H1 (cell line): ENCODE measurements at regions of chr2 and their contacts with region 1.

Region 1: DNA sequence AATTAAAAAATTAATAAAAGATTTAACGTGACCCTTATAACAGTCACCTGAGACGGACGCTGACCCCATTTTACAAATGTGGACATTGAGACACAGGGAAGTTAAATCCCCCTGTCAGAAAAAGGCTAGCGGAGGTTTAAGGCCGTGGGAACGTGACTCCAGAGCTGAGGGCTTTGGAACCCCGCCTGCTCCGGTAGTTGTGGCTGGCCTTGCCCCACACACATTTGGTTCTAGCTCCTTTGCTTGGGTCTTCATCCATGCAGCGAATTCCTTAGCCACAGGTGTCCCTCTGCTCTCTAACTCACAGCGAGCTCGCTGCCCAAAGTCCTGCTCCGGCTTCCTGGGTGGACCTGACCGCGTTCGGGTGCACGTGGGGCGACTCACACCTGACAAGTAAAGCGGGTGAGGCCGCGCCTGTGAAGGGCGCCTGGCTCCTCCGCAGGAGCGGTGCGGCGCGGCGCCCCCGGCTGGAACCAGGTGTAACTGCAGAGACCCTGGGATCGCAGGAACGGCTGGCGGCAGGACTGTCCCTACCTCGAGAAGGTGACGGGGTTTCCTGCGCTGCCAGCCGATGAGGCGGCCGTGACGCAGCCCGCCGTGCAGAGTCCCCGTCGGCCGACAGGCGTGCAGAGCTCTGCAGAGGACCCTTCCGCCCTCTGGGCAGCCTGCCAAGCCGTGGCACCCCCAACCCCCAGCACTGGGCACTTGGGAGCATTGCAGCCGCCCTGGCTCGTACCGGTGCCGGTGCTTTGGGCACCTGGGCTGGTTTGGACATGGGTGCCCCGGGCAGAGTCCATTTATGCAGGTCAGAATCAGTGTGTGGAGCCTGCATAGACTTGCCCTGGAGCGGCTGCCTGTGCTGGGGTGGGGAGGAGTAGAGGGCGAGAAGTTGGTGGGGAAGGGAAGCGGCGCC is 2.4 kb upstream of the PROC start:
- DNase-seq: peak in 1 of 2 experiments; percentile 96
- H3K4me3 ChIP-seq: peak overlapping the region; percentile 13 to 58 (median 40); a peak in 7 of 8 replicates
- H3K27ac ChIP-seq: no peak overlapping the region
- H3K4me1 ChIP-seq: peaks cover 0 to 6% (median 0%) of the 10 kb centered on the region in 4 experiments; a peak in 2 of 7 replicates
- H3K27me3 ChIP-seq: peaks cover 1 to 33% (median 20%) of the 10 kb centered on the region in 4 experiments
- CTCF ChIP-seq: peak in 2 of 3 experiments; percentile 80 to 87; a peak in 3 of 4 replicates
- EP300 ChIP-seq: no peak
- POLR2A ChIP-seq: no peak
- RAD21 ChIP-seq: peak; percentile 72 to 76

Region 2: GRCh38 chr2:127313406-127313805 is 102.4 kb before region 1 on chr2:
- CTCF ChIA-PET with region 1: no interaction called
- POLR2A ChIA-PET with region 1: no interaction called
- DNase-seq: no peak
- H3K4me3 ChIP-seq: no peak overlapping the region
- H3K27ac ChIP-seq: no peak overlapping the region
- H3K4me1 ChIP-seq: no peaks in the 10 kb centered on the region
- H3K27me3 ChIP-seq: no peaks in the 10 kb centered on the region
- CTCF ChIP-seq: no peak
- EP300 ChIP-seq: no peak
- POLR2A ChIP-seq: no peak
- RAD21 ChIP-seq: no peak

Region 3: GRCh38 chr2:127324635-127325034 is 91.2 kb before region 1 on chr2:
- CTCF ChIA-PET with region 1: interaction called, 22 read pairs
- POLR2A ChIA-PET with region 1: interaction called, 3 read pairs
- DNase-seq: no peak
- H3K4me3 ChIP-seq: no peak overlapping the region
- H3K27ac ChIP-seq: no peak overlapping the region
- H3K4me1 ChIP-seq: no peaks in the 10 kb centered on the region
- H3K27me3 ChIP-seq: no peaks in the 10 kb centered on the region
- CTCF ChIP-seq: peak in 2 of 3 experiments; percentile 34 to 49; a peak in 2 of 4 replicates
- EP300 ChIP-seq: no peak
- POLR2A ChIP-seq: no peak
- RAD21 ChIP-seq: peak; percentile 62 to 64

Region 4: GRCh38 chr2:127398239-127398590 is 17.6 kb before region 1 on chr2:
- CTCF ChIA-PET with region 1: interaction called, 60 read pairs
- POLR2A ChIA-PET with region 1: interaction called, 3 read pairs
- DNase-seq: no peak
- H3K4me3 ChIP-seq: no peak overlapping the region
- H3K27ac ChIP-seq: no peak overlapping the region
- H3K4me1 ChIP-seq: peaks cover 0 to 4% (median 2%) of the 10 kb centered on the region in 4 experiments; a peak in 1 of 7 replicates
- H3K27me3 ChIP-seq: no peaks in the 10 kb centered on the region
- CTCF ChIP-seq: no peak
- EP300 ChIP-seq: no peak
- POLR2A ChIP-seq: no peak
- RAD21 ChIP-seq: no peak

Region 5: DNA sequence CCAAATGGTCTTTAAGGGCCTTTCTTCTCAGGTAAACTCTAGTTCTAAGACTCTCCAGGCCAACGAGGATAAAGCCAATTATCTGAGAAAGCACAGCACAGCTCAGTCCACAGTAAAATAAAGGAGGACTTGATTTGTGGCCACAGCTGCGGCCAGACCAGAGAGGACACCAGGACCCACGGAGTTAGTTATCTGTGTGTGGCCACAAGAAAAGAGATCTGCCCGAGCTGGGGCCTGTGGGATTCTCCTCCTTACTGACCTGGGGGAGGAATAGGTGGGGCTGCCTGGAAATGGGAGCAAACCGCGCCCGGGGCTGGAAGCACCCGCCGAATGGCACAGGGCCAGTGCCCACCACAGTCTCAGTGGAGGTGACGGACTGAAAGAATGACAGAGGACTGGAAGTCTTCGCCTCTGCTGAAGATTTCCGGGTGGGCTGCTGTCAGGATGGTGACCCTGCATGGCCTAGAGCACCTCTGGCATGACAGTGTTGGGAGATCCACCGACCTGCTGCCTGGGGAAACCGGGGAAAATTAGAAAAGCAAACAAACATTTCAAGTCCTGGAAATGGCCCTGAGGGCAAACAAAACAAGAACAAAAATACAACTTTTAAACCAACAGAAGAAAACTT is 15.7 kb after region 1 on chr2:
- CTCF ChIA-PET with region 1: interaction called, 74 read pairs
- POLR2A ChIA-PET with region 1: interaction called, 4 read pairs
- DNase-seq: peak in 1 of 2 experiments; percentile 24
- H3K4me3 ChIP-seq: no peak overlapping the region
- H3K27ac ChIP-seq: no peak overlapping the region
- H3K4me1 ChIP-seq: no peaks in the 10 kb centered on the region
- H3K27me3 ChIP-seq: no peaks in the 10 kb centered on the region
- CTCF ChIP-seq: no peak
- EP300 ChIP-seq: no peak
- POLR2A ChIP-seq: no peak
- RAD21 ChIP-seq: no peak

Region 6: GRCh38 chr2:127453392-127454171 is 37.7 kb after region 1 on chr2:
- CTCF ChIA-PET with region 1: interaction called, 59 read pairs
- POLR2A ChIA-PET with region 1: interaction called, 3 read pairs
- DNase-seq: peak in 1 of 2 experiments; percentile 51
- H3K4me3 ChIP-seq: no peak overlapping the region
- H3K27ac ChIP-seq: no peak overlapping the region
- H3K4me1 ChIP-seq: peaks cover 11 to 16% (median 14%) of the 10 kb centered on the region in 4 experiments
- H3K27me3 ChIP-seq: no peaks in the 10 kb centered on the region
- CTCF ChIP-seq: peak; percentile 61 to 66 (median 62)
- EP300 ChIP-seq: no peak
- POLR2A ChIP-seq: no peak
- RAD21 ChIP-seq: peak; percentile 79 to 81